Dorsolateral prefrontal cortex (tissue), 120 donors: ENCODE measurements at regions of chr11 and their contacts with region 1.

Region 1: GRCh38 chr11:506238-506994 is 626 bp downstream of the RNH1 start:
- DNase-seq: peak; percentile 93 to 98 (median 96)
- H3K4me3 ChIP-seq: peak overlapping the region; percentile 62 to 100 (median 97)
- H3K27ac ChIP-seq: peak overlapping the region; percentile 88 to 100 (median 99)
- H3K27me3 ChIP-seq: no peaks in the 10 kb centered on the region
- CTCF ChIP-seq: peak in 30 of 56 donors; percentile 7 to 61 (median 32)

Region 2: GRCh38 chr11:236774-237767 is 269.3 kb before region 1 on chr11 and contains the start of gene PSMD13:
- intact Hi-C with region 1: loop called (anchors 5 to 10 kb)
- DNase-seq: peak; percentile 75 to 95 (median 82)
- H3K4me3 ChIP-seq: peak within 1 kb of the TSS; percentile 77 to 100 (median 98)
- H3K27ac ChIP-seq: peak within 1 kb of the TSS; percentile 32 to 98 (median 94)
- H3K27me3 ChIP-seq: no peaks in the 10 kb centered on the region
- CTCF ChIP-seq: peak in 27 of 56 donors; percentile 3 to 56 (median 21)
- total RNA-seq, gene PSMD13: 50.5 to 105 (median 80.8) TPM

Region 3: GRCh38 chr11:406978-407739 is 99.3 kb before region 1 on chr11:
- intact Hi-C with region 1: loop called in 1 of 2 experiments (anchors 5 kb)
- DNase-seq: no peak
- H3K4me3 ChIP-seq: peak overlapping the region; percentile 42 to 80 (median 68)
- H3K27ac ChIP-seq: peak overlapping the region in 43 of 59 donors; percentile 9 to 86 (median 58)
- H3K27me3 ChIP-seq: peaks cover 0 to 11% (median 0%) of the 10 kb centered on the region in 45 donors
- CTCF ChIP-seq: peak in 6 of 56 donors; percentile 0 to 9 (median 2)

Region 4: GRCh38 chr11:447923-448731 is 58.3 kb before region 1 on chr11:
- intact Hi-C with region 1: loop called (anchors 1 to 2 kb)
- DNase-seq: peak; percentile 90 to 95 (median 94)
- H3K4me3 ChIP-seq: peak overlapping the region; percentile 56 to 100 (median 78)
- H3K27ac ChIP-seq: peak overlapping the region; percentile 45 to 99 (median 96)
- H3K27me3 ChIP-seq: peaks cover 0 to 5% (median 0%) of the 10 kb centered on the region in 45 donors
- CTCF ChIP-seq: peak; percentile 45 to 94 (median 89)

Region 5: GRCh38 chr11:518463-519250 is 12.2 kb after region 1 on chr11:
- intact Hi-C with region 1: loop called in 1 of 2 experiments (anchors 1 kb)
- DNase-seq: peak; percentile 62 to 85 (median 71)
- H3K4me3 ChIP-seq: peak overlapping the region in 54 of 59 donors; percentile 16 to 63 (median 42)
- H3K27ac ChIP-seq: peak overlapping the region in 46 of 59 donors; percentile 3 to 80 (median 59)
- H3K27me3 ChIP-seq: no peaks in the 10 kb centered on the region
- CTCF ChIP-seq: peak; percentile 74 to 100 (median 98)

Region 6: DNA sequence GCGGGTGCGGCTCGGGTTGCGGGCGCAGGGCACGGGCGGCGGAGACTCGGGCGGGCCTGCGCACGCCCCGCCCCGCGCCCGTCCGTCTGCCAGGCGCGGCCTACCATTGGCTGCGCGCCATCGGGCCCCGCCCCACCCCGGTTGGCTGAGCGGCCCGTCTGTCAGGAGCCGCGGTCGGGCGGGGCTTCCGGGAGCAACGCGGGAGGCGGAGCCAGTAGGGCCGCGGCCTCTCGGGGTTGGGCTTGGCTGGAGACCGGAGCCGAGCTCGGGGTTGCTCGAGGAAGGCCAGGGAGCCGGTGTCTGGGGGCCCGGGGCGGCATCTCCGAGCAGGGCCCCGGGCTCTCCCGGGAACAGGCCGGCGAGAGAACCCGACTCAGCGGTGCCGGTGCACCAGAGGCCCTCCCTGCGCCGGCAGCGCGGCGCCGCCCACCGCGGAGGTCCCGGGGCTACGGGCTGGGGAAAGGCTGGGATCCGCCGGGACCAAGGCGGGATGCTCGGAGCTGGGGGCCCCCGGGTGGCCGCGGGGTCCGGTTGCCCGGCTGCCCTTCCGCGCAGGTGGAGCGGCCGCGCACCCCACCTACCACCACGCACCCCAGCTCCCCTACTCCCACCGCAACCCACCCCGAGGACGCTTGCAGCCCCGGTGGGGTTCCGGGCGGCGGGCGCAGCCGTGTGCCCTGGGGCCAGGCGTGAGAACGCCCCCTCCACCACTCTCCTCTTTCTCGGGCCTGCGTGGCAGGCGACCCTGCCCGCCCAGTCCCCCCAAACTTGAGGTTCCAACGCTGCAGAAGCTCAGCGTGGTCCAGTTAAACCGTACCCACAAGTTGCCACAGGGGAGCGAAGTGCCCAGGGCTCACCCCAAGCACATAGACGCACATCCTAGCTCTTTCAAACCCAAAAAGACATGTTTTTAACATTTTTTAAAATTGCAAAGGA is 29.4 kb after region 1 on chr11 and contains the start of gene HRAS:
- intact Hi-C with region 1: loop called in 1 of 2 experiments (anchors 1 kb)
- DNase-seq: peak; percentile 88 to 98 (median 94)
- H3K4me3 ChIP-seq: peak within 1 kb of the TSS; percentile 68 to 92 (median 86)
- H3K27ac ChIP-seq: peak within 1 kb of the TSS in 57 of 59 donors; percentile 35 to 93 (median 80)
- H3K27me3 ChIP-seq: peaks cover 0 to 10% (median 0%) of the 10 kb centered on the region in 45 donors
- CTCF ChIP-seq: peak in 10 of 56 donors; percentile 9 to 41 (median 20)
- total RNA-seq, gene HRAS: 50.7 to 122 (median 86.8) TPM